GM12878 (cell line): ENCODE measurements at regions of chr14 and their contacts with region 1.

Region 1: GRCh38 chr14:50619556-50620141 is 48.5 kb downstream of the SAV1 start:
- DNase-seq: peak; percentile 21
- ATAC-seq: peak; percentile 92
- H3K4me3 ChIP-seq: no peak overlapping the region
- H3K27ac ChIP-seq: no peak overlapping the region
- H3K4me1 ChIP-seq: no peaks in the 10 kb centered on the region
- H3K27me3 ChIP-seq: no peaks in the 10 kb centered on the region
- CTCF ChIP-seq: peak; percentile 69 to 80 (median 76)
- EP300 ChIP-seq: no peak
- POLR2A ChIP-seq: no peak
- RAD21 ChIP-seq: peak; percentile 83

Region 2: DNA sequence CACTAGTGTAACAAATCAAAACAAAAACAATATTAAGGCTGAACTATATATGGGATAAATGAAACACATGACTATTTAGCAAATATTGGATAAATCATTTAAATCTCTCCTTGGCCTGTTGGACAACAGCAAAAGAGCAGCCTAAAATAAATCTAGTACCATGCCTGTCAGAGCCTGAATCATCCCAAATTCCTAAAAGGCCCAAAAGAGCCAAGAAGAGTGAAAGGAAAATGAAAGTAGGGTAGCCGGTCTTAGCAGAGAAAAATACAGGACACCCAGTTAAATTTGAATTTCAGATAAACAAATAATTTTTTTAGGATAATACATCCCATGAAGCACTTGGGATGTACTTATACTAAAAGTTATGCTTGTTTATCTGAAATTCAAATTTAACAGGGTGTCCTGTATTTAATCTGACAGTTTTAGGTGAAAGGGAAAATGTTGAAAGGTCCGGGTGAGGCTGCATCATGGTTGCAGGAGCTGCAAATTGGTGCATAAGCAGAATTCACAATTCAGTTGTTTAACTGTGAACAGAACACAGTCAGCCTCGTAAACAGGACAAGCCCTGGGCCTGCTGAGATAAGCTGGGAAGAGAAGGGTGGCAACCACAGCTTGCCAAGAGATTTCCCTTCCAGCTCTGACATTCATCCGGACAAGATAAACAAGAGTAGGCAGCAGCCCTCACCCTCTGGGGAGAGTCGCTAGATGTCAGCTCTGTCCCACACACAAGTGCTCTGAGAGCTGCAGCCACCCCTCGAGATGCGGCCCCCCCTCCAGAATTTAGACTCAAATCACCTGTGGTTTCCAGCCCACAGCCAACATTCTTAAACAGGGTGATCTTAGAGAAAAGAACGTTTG is 277.2 kb before region 1 on chr14:
- CTCF ChIA-PET with region 1: interaction called, 12 read pairs
- POLR2A ChIA-PET with region 1: no interaction called
- RAD21 ChIA-PET with region 1: no interaction called
- SMC1A ChIA-PET with region 1: interaction called, 4 read pairs
- in situ Hi-C with region 1: no loop called
- intact Hi-C with region 1: no loop called
- DNase-seq: no peak
- ATAC-seq: peak; percentile 86
- H3K4me3 ChIP-seq: no peak overlapping the region
- H3K27ac ChIP-seq: no peak overlapping the region
- H3K4me1 ChIP-seq: peaks cover 9% of the 10 kb centered on the region
- H3K27me3 ChIP-seq: no peaks in the 10 kb centered on the region
- CTCF ChIP-seq: peak; percentile 60 to 84 (median 67)
- EP300 ChIP-seq: no peak
- POLR2A ChIP-seq: no peak
- RAD21 ChIP-seq: peak; percentile 83

Region 3: DNA sequence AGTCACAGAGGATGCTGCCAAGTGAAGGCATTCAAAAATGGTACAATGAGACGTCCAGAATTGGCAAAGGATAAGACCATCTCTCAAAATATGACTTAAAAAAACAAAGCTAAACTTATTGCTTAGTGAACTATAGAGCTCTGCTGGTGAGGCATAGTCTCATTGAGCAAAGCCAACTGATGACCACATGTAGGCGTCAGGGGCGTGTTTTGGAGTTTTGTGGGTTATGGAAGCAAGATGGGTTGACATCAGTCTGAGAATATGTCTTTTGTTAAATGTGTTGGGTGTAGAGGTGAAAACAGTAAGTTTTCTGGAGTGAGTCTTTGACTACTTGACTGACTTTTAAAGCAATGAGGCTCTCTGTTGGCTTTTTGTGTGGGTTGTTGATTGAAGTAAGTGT is 12.5 kb before region 1 on chr14:
- CTCF ChIA-PET with region 1: interaction called, 26 read pairs
- POLR2A ChIA-PET with region 1: interaction called, 4 read pairs
- RAD21 ChIA-PET with region 1: no interaction called
- SMC1A ChIA-PET with region 1: interaction called, 15 read pairs
- in situ Hi-C with region 1: no loop called
- intact Hi-C with region 1: no loop called
- DNase-seq: no peak
- ATAC-seq: peak; percentile 61
- H3K4me3 ChIP-seq: no peak overlapping the region
- H3K27ac ChIP-seq: no peak overlapping the region
- H3K4me1 ChIP-seq: no peaks in the 10 kb centered on the region
- H3K27me3 ChIP-seq: no peaks in the 10 kb centered on the region; a peak in 1 of 4 replicates
- CTCF ChIP-seq: no peak
- EP300 ChIP-seq: no peak
- POLR2A ChIP-seq: no peak
- RAD21 ChIP-seq: no peak

Region 4: GRCh38 chr14:50667996-50668825 is 48.6 kb after region 1 on chr14 and contains the start of gene SAV1:
- CTCF ChIA-PET with region 1: interaction called, 11 read pairs
- POLR2A ChIA-PET with region 1: interaction called, 5 read pairs
- RAD21 ChIA-PET with region 1: interaction called, 12 read pairs
- SMC1A ChIA-PET with region 1: interaction called, 5 read pairs
- in situ Hi-C with region 1: no loop called
- intact Hi-C with region 1: no loop called
- DNase-seq: no peak
- ATAC-seq: peak; percentile 78
- H3K4me3 ChIP-seq: peak within 1 kb of the TSS; percentile 90
- H3K27ac ChIP-seq: peak within 1 kb of the TSS; percentile 30
- H3K4me1 ChIP-seq: no peaks in the 10 kb centered on the region
- H3K27me3 ChIP-seq: no peaks in the 10 kb centered on the region
- CTCF ChIP-seq: no peak
- EP300 ChIP-seq: no peak
- POLR2A ChIP-seq: peak; percentile 84
- RAD21 ChIP-seq: peak; percentile 11; the same call in 1 of the 2 replicates
- polyA plus RNA-seq, gene SAV1: 10.1 to 15.1 TPM

Region 5: DNA sequence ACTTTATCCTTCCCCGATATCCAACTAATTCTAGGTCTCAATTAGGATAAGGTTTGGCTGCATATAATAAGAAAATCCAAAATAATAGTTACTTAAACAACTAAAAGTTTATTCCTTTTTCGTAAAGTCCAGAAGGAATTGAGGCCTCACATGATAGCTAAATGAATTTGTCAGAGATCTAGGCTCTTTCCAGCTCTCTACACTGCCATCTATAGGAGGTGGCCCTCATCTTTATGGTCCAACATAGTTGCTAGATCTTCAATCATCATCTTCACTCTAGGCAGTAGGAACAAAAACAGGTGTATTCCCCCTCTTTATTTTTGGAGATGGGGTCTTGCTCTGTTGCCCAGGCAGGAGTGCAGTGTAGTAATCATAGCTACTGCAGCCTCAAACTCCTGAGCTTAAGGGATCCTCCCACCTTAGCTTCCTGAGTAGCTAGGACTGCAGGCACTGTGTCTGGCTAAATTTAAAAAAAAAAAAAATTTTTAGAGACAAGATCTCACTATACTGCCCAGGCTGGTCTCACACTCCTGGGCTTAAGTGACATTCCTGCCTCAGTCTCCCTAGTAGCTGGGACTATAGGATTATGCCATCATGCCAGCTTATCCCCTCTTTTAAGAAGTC is 94.9 kb after region 1 on chr14:
- CTCF ChIA-PET with region 1: interaction called, 50 read pairs
- POLR2A ChIA-PET with region 1: no interaction called
- RAD21 ChIA-PET with region 1: interaction called, 36 read pairs
- SMC1A ChIA-PET with region 1: interaction called, 27 read pairs
- in situ Hi-C with region 1: no loop called
- intact Hi-C with region 1: loop called (anchors 1 kb)
- DNase-seq: no peak
- ATAC-seq: peak; percentile 85
- H3K4me3 ChIP-seq: no peak overlapping the region
- H3K27ac ChIP-seq: no peak overlapping the region
- H3K4me1 ChIP-seq: no peaks in the 10 kb centered on the region
- H3K27me3 ChIP-seq: no peaks in the 10 kb centered on the region
- CTCF ChIP-seq: peak; percentile 50 to 54 (median 52); a peak in 5 of 6 replicates
- EP300 ChIP-seq: no peak
- POLR2A ChIP-seq: no peak
- RAD21 ChIP-seq: peak; percentile 64

Region 6: GRCh38 chr14:50756300-50756699 is 136.7 kb after region 1 on chr14:
- CTCF ChIA-PET with region 1: interaction called, 12 read pairs
- POLR2A ChIA-PET with region 1: interaction called, 4 read pairs
- RAD21 ChIA-PET with region 1: interaction called, 13 read pairs
- SMC1A ChIA-PET with region 1: interaction called, 18 read pairs
- in situ Hi-C with region 1: no loop called
- intact Hi-C with region 1: no loop called
- DNase-seq: no peak
- ATAC-seq: peak; percentile 75
- H3K4me3 ChIP-seq: no peak overlapping the region
- H3K27ac ChIP-seq: peak overlapping the region; percentile 51
- H3K4me1 ChIP-seq: peaks cover 11% of the 10 kb centered on the region
- H3K27me3 ChIP-seq: no peaks in the 10 kb centered on the region
- CTCF ChIP-seq: no peak
- EP300 ChIP-seq: no peak
- POLR2A ChIP-seq: no peak
- RAD21 ChIP-seq: no peak